Activated CD4-positive, alpha-beta T cell treated with anti-CD3 and anti-CD28 coated beads, Interleukin-2, amount 10 ng/mL, durations not matched to agents 24 days and 14 days (primary cell): ENCODE measurements at regions of chr9 and their contacts with region 1.

Region 1: GRCh38 chr9:21559424-21560280 is 77.5 kb upstream of the IFNE start:
- DNase-seq: peak; percentile 84
- H3K4me3 Mint-ChIP-seq: peak overlapping the region; percentile 85
- H3K27ac Mint-ChIP-seq: no peak overlapping the region
- H3K4me1 Mint-ChIP-seq: peaks cover 17% of the 10 kb centered on the region
- H3K27me3 Mint-ChIP-seq: peaks cover 60% of the 10 kb centered on the region

Region 2: GRCh38 chr9:21677834-21678233 is 118.2 kb after region 1 on chr9:
- intact Hi-C with region 1: loop called (anchors 1 kb)
- DNase-seq: no peak
- H3K4me3 Mint-ChIP-seq: no peak overlapping the region
- H3K27ac Mint-ChIP-seq: no peak overlapping the region
- H3K4me1 Mint-ChIP-seq: no peaks in the 10 kb centered on the region
- H3K27me3 Mint-ChIP-seq: peaks cover 6% of the 10 kb centered on the region